ENCODE measurements at regions of chr17 and their contacts with region 1.

Region 1: DNA sequence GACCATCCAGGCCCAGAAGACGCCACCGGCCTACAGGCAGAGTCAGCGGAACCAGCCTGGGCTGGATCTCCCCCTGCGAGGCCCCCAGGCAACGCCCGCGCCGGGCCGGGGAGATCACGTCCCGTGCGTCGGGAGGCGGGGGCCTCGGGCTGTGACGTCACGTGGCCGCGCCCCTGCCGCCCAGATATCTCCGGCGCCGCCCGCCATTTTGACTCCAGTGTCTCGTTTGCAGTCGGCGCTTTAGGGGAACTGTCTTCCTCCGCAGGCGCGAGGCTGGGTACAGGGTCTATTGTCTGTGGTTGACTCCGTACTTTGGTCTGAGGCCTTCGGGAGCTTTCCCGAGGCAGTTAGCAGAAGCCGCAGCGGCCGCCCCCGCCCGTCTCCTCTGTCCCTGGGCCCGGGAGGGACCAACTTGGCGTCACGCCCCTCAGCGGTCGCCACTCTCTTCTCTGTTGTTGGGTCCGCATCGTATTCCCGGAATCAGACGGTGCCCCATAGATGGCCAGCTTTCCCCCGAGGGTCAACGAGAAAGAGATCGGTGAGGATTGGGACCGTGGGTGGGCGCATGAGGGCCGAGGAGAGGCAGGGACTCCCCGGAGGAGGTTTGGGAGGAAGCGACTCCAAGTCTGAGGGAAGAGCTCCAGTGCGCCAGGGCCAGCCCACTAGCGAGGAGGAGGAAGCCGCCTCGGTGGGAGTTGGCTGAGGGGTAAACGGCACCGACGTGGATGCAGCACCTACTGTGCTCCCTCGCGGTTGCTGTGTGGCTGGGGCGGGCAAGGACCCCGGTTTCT is at the start of gene WSB1:
- DNase-seq: peak; percentile 73
- H3K4me3 ChIP-seq: peak within 1 kb of the TSS; percentile 94
- H3K27ac ChIP-seq: peak within 1 kb of the TSS; percentile 98
- H3K27me3 ChIP-seq: no peaks in the 10 kb centered on the region
- CTCF ChIP-seq: no peak
- polyA plus RNA-seq, gene WSB1: 156 and 204 TPM in 2 replicates

Region 2: DNA sequence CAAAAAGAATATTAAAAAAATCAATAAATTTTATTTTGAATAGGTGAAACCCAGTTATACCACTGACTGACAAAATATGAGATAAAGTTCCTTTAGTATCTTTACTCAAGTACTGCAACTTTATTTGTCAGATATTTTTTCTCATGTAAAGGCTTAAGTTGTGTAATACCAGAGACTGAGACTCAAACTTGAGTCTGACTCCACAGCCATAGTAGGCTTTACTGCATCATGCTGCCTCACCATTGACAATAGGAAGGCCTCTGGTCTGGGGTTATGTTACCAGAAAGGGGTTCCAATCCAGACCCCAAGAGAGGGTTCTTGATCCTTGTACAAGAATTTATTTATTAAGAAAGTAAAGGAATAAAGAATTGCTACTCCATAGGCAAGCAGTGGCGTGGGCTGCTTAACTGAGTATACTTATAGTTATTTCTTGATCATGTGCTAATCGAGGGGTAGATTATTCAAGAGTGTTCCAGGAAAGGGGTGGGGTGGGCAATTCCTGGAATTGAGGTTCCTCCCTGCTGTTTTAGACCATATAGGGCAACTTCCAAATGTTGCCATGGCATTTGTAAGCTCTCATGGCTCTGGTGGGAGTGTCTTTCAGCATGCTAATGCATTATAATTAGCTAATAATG is 187.6 kb before region 1 on chr17:
- CTCF ChIA-PET with region 1: no interaction called
- POLR2A ChIA-PET with region 1: no interaction called
- DNase-seq: no peak
- H3K4me3 ChIP-seq: no peak overlapping the region
- H3K27ac ChIP-seq: no peak overlapping the region
- H3K27me3 ChIP-seq: no peaks in the 10 kb centered on the region
- CTCF ChIP-seq: no peak

Region 3: GRCh38 chr17:27245230-27245696 is 48.8 kb before region 1 on chr17:
- CTCF ChIA-PET with region 1: interaction called, 5 read pairs
- POLR2A ChIA-PET with region 1: interaction called, 44 read pairs
- DNase-seq: peak; percentile 82
- H3K4me3 ChIP-seq: peak overlapping the region; percentile 51
- H3K27ac ChIP-seq: peak overlapping the region; percentile 99
- H3K27me3 ChIP-seq: no peaks in the 10 kb centered on the region
- CTCF ChIP-seq: peak; percentile 70

Region 4: GRCh38 chr17:27265333-27265732 is 28.8 kb before region 1 on chr17:
- CTCF ChIA-PET with region 1: no interaction called
- POLR2A ChIA-PET with region 1: no interaction called
- DNase-seq: no peak
- H3K4me3 ChIP-seq: no peak overlapping the region
- H3K27ac ChIP-seq: no peak overlapping the region
- H3K27me3 ChIP-seq: peaks cover 21% of the 10 kb centered on the region
- CTCF ChIP-seq: no peak

Region 5: DNA sequence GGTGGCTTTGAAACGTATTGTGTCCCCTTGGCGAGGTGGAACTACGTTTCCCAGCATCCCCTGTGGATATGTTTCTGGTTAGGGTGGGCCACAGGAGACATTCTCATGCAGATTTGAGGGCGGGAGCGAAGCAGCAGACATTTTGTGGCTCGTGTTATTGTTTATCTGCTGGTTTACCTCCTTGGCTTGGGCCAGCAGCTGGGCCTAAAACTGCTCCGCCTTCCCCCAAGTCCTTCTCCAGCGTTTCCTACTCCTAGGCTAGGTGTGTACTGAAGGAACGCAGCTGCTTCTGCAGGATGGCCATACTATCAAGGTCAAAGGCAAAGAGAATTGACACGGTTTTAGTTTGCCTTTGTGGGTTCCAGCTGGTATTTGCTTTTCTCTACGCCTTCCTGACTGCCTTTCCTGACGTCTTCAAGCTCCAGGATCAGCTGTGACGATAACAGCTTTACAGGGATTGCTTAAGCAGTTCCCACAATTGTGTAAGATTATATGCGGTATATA is 17.4 kb before region 1 on chr17:
- CTCF ChIA-PET with region 1: no interaction called
- POLR2A ChIA-PET with region 1: interaction called, 13 read pairs
- DNase-seq: peak; percentile 48
- H3K4me3 ChIP-seq: no peak overlapping the region
- H3K27ac ChIP-seq: peak overlapping the region; percentile 61
- H3K27me3 ChIP-seq: no peaks in the 10 kb centered on the region
- CTCF ChIP-seq: no peak

Region 6: GRCh38 chr17:27306276-27306835 is 12.3 kb after region 1 on chr17:
- CTCF ChIA-PET with region 1: interaction called, 3 read pairs
- POLR2A ChIA-PET with region 1: interaction called, 25 read pairs
- DNase-seq: no peak
- H3K4me3 ChIP-seq: no peak overlapping the region
- H3K27ac ChIP-seq: no peak overlapping the region
- H3K27me3 ChIP-seq: no peaks in the 10 kb centered on the region
- CTCF ChIP-seq: no peak

Region 7: GRCh38 chr17:27323524-27324206 is 29.6 kb after region 1 on chr17:
- CTCF ChIA-PET with region 1: no interaction called
- POLR2A ChIA-PET with region 1: interaction called, 11 read pairs
- DNase-seq: no peak
- H3K4me3 ChIP-seq: no peak overlapping the region
- H3K27ac ChIP-seq: no peak overlapping the region
- H3K27me3 ChIP-seq: no peaks in the 10 kb centered on the region
- CTCF ChIP-seq: no peak

Region 8: DNA sequence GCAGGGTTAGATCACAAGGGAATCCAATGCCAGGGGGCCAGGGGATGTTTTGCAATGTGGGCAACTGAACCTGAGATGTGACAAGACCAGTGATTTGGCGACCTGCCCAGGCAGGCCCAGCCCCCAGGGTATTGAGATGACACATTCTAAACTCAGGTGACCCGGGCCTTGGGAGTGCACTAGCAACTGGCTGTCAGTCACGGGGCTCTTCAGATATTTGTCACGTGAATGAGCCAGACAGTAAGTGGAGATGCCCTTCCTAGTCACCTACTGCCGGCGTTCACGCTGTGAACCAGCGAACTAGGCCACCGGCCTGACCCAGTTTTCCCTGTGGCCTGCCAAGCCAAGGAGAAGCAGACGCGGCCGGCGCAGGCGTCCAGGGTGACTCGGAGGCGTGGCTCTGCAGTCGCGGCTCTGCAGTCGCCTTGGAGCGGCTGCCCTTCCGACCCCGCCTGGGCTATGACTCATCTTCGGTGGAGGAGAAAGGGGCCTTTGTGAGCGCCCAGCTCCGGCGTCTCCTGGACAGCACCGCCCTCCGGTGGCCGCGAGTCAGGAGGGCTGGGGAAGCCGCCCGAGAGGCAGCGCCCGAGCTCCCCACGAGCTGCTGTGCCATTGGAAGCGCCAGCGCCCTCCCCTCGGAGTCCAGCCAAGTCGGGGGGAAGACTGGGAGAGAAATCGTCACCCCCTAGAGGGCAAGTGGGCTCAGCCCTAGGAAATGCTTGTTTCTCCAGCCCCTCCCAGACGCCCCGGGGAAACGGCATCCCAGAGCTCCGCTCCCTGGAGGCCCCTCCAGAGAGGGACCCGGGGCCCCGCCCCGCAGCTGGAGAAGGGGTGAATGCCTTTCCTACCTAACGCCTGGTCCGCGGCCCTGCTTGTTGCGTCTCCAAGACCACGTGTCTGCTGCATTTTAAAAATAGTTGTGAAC is 38.7 kb after region 1 on chr17:
- CTCF ChIA-PET with region 1: no interaction called
- POLR2A ChIA-PET with region 1: interaction called, 20 read pairs
- DNase-seq: peak; percentile 89
- H3K4me3 ChIP-seq: peak overlapping the region; percentile 61
- H3K27ac ChIP-seq: peak overlapping the region; percentile 86
- H3K27me3 ChIP-seq: no peaks in the 10 kb centered on the region
- CTCF ChIP-seq: peak; percentile 78

Measured in AG04450 (cell line).